ENCODE measurements at regions of chr2 and their contacts with region 1.

Region 1: GRCh38 chr2:110755491-110756078 is 23.2 kb downstream of the ACOXL start:
- DNase-seq: peak; percentile 28
- H3K4me3 ChIP-seq: no peak overlapping the region; a peak in 1 of 4 replicates
- H3K27ac ChIP-seq: no peak overlapping the region
- H3K4me1 ChIP-seq: no peaks in the 10 kb centered on the region; a peak in 1 of 4 replicates
- H3K27me3 ChIP-seq: no peaks in the 10 kb centered on the region
- CTCF ChIP-seq: peak; percentile 74
- EP300 ChIP-seq: no peak
- RAD21 ChIP-seq: peak; percentile 66

Region 2: DNA sequence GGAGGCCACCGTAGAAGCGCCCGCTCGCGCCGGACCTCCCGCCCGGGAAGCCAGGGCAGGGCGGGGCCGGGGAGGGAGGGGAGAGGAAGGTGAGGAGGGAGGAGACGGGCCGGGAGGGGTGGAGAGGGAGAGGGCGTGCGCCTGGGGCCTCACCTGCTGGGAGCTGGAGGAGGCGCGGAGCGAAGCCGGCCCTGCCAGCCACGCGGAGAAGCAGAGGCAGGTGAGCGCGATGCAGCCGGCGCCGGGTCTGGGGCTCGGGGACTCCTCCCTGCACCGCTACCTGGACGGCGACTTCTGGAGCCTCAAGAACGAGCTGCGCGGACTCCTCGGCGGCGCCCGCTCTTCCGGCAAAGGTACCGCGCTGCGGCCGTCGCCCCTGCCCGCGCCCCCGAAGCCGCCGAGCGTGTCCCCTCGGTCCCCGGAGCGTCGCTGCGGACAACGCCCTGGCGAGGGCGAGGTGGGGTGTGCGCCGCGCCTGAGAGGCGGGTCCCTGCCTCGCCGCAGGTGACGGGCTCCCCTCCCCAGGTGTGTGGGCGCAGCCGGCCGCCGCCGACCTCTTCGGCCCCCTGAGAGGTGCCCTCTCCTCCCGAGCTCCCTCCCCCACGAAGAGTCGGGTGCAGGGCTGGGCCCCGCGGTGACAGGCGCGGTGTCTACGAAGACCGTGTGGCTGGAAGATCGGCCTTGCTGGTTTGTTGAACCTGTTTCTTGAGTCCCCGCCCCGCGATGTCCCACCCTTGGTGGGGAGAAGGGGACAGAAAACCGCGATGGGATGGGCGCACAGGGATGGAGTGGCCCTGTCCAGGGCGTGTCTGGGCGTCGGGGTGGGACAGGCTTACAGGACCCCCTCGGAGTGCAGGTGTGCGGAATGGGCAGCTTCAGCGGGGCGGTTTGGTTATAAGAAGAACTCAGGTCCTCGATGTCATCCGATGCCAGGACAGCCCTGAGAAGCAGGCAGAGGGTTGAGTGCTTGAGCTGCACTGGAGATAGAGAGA is 22.9 kb before region 1 on chr2 and contains the start of gene ACOXL:
- CTCF ChIA-PET with region 1: interaction called, 11 read pairs
- POLR2A ChIA-PET with region 1: no interaction called
- DNase-seq: peak; percentile 51
- H3K4me3 ChIP-seq: peak within 1 kb of the TSS in 1 of 2 experiments; percentile 34; a peak in 1 of 4 replicates
- H3K27ac ChIP-seq: no peak within 1 kb of the TSS
- H3K4me1 ChIP-seq: peaks cover 0 to 6% of the 10 kb centered on the region in 2 experiments; a peak in 1 of 4 replicates
- H3K27me3 ChIP-seq: peaks cover 74% of the 10 kb centered on the region
- CTCF ChIP-seq: no peak
- EP300 ChIP-seq: no peak
- RAD21 ChIP-seq: no peak
- polyA plus RNA-seq, gene ACOXL: not detected in 2 replicates

Region 3: GRCh38 chr2:110770959-110771431 is 15.4 kb after region 1 on chr2:
- CTCF ChIA-PET with region 1: interaction called, 59 read pairs
- POLR2A ChIA-PET with region 1: no interaction called
- DNase-seq: peak; percentile 83
- H3K4me3 ChIP-seq: peak overlapping the region; percentile 28 to 48
- H3K27ac ChIP-seq: peak overlapping the region in 1 of 2 experiments; percentile 88; a peak in 2 of 4 replicates
- H3K4me1 ChIP-seq: peaks cover 0 to 37% of the 10 kb centered on the region in 2 experiments; a peak in 3 of 4 replicates
- H3K27me3 ChIP-seq: peaks cover 16% of the 10 kb centered on the region
- CTCF ChIP-seq: no peak
- EP300 ChIP-seq: peak in 1 of 2 experiments; percentile 82; a peak in 2 of 4 replicates
- RAD21 ChIP-seq: 0 out of 2 replicates have a peak, but pooled peaks have one; percentile 23

Measured in SK-N-SH (cell line).